Breast epithelium (tissue), 4 donors: ENCODE measurements at regions of chr19 and their contacts with region 1.

Region 1: DNA sequence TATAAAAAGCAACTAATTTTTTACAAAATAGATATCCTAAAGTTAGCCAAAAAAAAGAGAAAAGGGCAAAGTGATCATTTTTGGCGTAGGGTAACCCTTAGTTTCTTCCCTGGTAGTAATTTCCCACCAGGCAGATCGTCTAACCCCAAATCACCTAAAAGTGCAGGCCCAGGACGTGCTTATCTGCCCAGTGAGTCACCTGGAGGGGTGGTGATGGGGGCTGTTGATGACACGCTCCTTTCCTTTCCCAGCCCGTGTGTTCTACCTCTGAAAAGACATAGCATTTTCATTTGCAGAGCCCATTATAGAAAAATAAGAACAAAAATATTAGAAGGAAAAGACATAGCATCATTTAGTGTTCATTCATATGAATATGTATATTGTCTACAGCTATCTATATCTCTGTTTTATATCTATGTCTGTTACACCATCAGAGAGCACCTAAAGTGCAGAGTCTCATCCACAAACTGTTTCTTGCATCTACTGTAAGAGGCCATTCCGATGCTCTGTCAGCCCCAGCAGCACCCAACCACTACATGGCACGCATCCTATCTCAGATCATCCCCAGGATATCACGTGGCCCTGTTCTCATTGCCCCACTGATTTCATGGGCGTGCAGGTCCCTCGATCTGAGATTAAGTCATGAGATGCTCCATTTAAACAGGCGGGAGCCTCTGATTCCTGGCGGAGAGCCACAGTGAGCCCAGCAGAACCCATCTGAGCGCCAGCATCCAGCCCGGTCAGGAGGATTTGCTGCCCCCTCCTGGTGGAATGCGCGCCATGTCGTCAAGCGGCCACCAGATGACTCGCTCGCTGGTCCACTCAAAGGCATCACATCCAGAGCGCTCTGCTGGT is 8.5 kb upstream of the LILRB3 start:
- DNase-seq: peak; percentile 60 to 80
- H3K4me3 ChIP-seq: no peak overlapping the region
- H3K27ac ChIP-seq: no peak overlapping the region
- H3K4me1 ChIP-seq: no peaks in the 10 kb centered on the region
- H3K27me3 ChIP-seq: peaks cover 0 to 14% of the 10 kb centered on the region in 2 donors
- CTCF ChIP-seq: peak; percentile 50 to 85 (median 85)
- POLR2A ChIP-seq: no peak

Region 2: GRCh38 chr19:54188215-54188921 is 42.9 kb before region 1 on chr19:
- intact Hi-C with region 1: no loop called
- DNase-seq: no peak
- H3K4me3 ChIP-seq: peak overlapping the region; percentile 65 to 93 (median 70)
- H3K27ac ChIP-seq: peak overlapping the region; percentile 96 to 99
- H3K4me1 ChIP-seq: peaks cover 0 to 17% of the 10 kb centered on the region in 2 donors
- H3K27me3 ChIP-seq: no peaks in the 10 kb centered on the region
- CTCF ChIP-seq: no peak
- POLR2A ChIP-seq: no peak

Region 3: GRCh38 chr19:54207977-54208783 is 23.1 kb before region 1 on chr19:
- intact Hi-C with region 1: loop called (anchors 1 kb)
- DNase-seq: peak in 1 of 2 donors; percentile 62
- H3K4me3 ChIP-seq: peak overlapping the region in 1 of 3 donors; percentile 45
- H3K27ac ChIP-seq: peak overlapping the region; percentile 73 to 96
- H3K4me1 ChIP-seq: peaks cover 0 to 18% of the 10 kb centered on the region in 2 donors
- H3K27me3 ChIP-seq: no peaks in the 10 kb centered on the region
- CTCF ChIP-seq: no peak
- POLR2A ChIP-seq: no peak

Region 4: GRCh38 chr19:54266133-54266532 is 34.8 kb after region 1 on chr19:
- intact Hi-C with region 1: no loop called
- DNase-seq: peak; percentile 39 to 72
- H3K4me3 ChIP-seq: no peak overlapping the region
- H3K27ac ChIP-seq: no peak overlapping the region
- H3K4me1 ChIP-seq: no peaks in the 10 kb centered on the region
- H3K27me3 ChIP-seq: no peaks in the 10 kb centered on the region
- CTCF ChIP-seq: peak in 2 of 3 donors; percentile 52 to 60
- POLR2A ChIP-seq: no peak

Region 5: DNA sequence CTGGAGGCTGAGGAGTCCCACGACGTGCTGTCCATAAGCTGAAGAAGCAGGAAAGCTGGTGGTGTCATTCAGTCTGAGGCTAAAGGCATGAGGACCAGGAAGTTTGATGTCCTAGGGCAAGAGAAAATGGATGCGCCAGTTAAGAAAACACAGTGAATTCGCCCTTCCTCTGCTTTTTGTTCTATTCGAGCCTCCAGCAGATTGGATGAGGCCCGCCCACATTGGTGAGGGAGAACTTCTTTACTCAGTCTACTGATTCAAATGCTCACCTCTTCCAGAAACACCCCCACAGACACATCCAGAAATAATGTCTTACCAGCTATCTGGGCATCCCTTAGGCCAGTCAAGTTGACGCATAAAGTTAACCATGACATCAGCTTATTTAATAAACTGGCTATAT is 176.5 kb after region 1 on chr19:
- intact Hi-C with region 1: no loop called
- DNase-seq: no peak
- H3K4me3 ChIP-seq: no peak overlapping the region
- H3K27ac ChIP-seq: no peak overlapping the region
- H3K4me1 ChIP-seq: no peaks in the 10 kb centered on the region
- H3K27me3 ChIP-seq: peaks cover 0 to 4% of the 10 kb centered on the region in 2 donors
- CTCF ChIP-seq: no peak
- POLR2A ChIP-seq: no peak

Region 6: GRCh38 chr19:55484593-55485438 is 1253.5 kb after region 1 on chr19 and contains the start of gene NAT14:
- intact Hi-C with region 1: no loop called
- DNase-seq: no peak
- H3K4me3 ChIP-seq: peak within 1 kb of the TSS; percentile 51 to 76 (median 64)
- H3K27ac ChIP-seq: peak within 1 kb of the TSS; percentile 92 to 96
- H3K4me1 ChIP-seq: peaks cover 22 to 23% of the 10 kb centered on the region in 2 donors
- H3K27me3 ChIP-seq: no peaks in the 10 kb centered on the region
- CTCF ChIP-seq: no peak
- POLR2A ChIP-seq: no peak
- total RNA-seq, gene NAT14: 1.9 to 11.3 (median 10.8) TPM